ENCODE measurements at regions of chr1 and their contacts with region 1.

Region 1: DNA sequence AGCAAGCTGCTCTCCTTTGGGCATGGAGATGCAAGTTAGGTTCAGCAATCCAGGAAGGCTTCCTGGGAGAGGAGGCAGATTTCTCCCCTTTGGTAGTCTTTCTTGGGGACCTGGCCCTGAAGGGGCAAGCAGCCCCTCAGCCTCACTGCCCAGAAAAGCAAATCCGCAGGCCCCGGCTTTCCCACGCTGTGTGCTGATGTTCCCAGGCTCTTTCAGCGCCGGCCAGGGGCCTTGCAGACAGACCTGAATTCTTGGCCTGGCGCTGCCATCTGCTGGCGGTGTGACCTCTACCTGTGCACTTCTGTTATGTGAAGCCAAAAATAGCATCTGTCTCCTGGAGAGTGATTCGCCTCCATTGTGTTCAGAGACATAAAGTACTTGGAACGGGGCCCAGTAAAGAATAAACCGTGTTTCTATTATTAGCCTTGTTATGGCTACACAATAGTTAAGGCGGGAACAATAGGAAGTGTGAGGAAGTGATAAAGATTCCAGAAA is 64.8 kb downstream of the ALPL start:
- DNase-seq: peak; percentile 93

Region 2: GRCh38 chr1:21232044-21232443 is 342.0 kb before region 1 on chr1:
- intact Hi-C with region 1: loop called (anchors 5 kb)
- DNase-seq: no peak

Region 3: GRCh38 chr1:21539933-21540332 is 34.1 kb before region 1 on chr1:
- intact Hi-C with region 1: loop called (anchors 2 kb)
- DNase-seq: no peak

Region 4: DNA sequence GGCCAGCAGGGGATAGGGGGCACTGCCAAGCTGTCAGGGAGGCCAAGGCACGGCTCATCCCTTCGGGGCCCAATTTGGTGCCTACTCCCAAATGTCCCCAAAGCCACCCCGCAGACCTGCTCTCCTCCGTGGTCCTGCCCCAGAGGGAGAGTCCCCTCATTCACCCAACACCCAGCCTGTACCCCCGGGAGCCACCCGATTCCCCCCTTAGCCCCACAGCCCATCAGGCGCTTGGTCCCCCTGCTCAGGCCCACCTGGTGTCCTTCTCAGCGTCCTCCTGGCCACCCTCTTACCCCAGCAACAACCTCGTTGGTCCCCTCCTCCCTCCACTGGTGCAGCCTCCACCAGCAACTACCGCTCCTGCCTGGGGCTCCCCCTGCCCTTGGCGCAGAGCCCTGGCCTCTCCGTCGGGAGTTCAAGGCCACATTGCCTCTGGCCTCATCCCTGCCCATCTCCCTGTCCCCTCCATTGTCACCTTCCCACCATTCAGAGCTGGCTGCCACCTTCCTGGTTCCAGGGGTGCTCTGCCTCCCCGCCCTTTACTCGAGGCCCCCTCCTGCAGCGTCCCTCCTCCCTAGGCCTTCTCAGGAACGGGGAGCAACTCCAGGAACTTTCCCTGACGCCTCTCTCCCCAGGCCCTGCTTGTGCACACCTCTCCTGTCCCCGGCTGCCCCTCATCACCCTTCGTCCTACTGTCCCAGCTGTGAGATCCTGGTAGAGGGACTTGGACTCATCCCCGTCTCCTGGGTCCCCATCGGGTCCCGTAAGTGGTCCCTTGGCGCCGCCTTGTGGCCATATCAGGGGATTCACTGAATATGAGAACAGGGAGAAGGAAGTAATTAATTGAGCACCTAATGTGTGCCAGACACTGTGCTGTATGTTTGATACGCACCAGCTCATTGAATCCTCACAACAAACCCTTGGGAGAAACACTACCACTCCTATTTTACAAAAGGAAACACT is 21.2 kb after region 1 on chr1:
- intact Hi-C with region 1: no loop called
- DNase-seq: peak; percentile 94

Region 5: GRCh38 chr1:21659099-21659923 is 85.3 kb after region 1 on chr1:
- intact Hi-C with region 1: loop called (anchors 5 kb)
- DNase-seq: peak; percentile 90

Measured in cardiac septum (tissue), 1 donor.